ENCODE measurements at regions of chr4 and their contacts with region 1.

Region 1: DNA sequence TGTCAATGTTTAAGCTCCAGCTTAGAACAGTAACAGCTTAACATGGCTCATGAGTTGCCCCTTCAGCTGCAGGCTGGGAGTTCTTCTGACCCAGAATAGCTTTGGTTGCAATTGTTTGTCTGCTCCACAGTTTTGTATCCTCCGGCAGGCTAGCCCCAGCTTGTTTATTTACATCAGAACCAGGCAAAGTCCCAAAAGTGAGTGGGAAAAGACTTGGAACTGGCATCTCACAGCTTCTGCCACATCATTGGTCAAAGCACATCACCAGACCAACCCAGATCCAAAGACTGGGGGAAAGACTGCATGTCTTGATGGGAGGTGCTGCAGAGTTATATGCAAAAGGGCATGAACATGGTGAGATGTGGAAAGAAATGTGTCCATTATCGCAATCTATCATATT is 231.2 kb upstream of the CPEB2 start:
- DNase-seq: peak; percentile 89
- H3K4me3 Mint-ChIP-seq: no peak overlapping the region
- H3K27ac Mint-ChIP-seq: peak overlapping the region; percentile 81
- H3K4me1 Mint-ChIP-seq: peaks cover 13% of the 10 kb centered on the region
- H3K27me3 Mint-ChIP-seq: no peaks in the 10 kb centered on the region
- CTCF ChIP-seq: no peak

Region 2: DNA sequence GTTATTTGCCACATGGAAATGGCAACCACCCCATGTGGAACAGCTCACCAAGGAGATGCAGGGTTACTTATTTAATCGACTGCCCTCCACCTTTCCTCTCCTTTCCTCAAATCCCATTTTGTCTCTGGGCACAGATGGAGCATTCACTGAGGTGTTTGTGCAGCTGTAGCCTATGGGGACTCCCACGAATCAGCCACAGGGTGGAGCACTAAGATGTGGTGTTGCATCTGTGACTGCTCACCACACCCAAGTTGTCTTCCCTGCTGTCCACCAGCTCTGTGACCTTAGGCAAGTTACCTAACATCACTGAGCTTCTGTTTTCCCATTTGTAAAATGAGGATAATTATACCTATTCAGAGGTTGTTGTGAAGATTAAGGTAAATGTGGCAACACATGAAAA is 21.2 kb before region 1 on chr4:
- CTCF ChIA-PET with region 1: interaction called, 11 read pairs
- POLR2A ChIA-PET with region 1: interaction called, 5 read pairs
- intact Hi-C with region 1: no loop called
- DNase-seq: peak; percentile 64
- H3K4me3 Mint-ChIP-seq: no peak overlapping the region
- H3K27ac Mint-ChIP-seq: no peak overlapping the region
- H3K4me1 Mint-ChIP-seq: no peaks in the 10 kb centered on the region
- H3K27me3 Mint-ChIP-seq: no peaks in the 10 kb centered on the region
- CTCF ChIP-seq: peak; percentile 25

Region 3: GRCh38 chr4:14888790-14889572 is 117.9 kb after region 1 on chr4:
- CTCF ChIA-PET with region 1: no interaction called
- POLR2A ChIA-PET with region 1: interaction called, 10 read pairs
- intact Hi-C with region 1: no loop called
- DNase-seq: peak; percentile 60
- H3K4me3 Mint-ChIP-seq: no peak overlapping the region
- H3K27ac Mint-ChIP-seq: peak overlapping the region; percentile 70
- H3K4me1 Mint-ChIP-seq: peaks cover 15% of the 10 kb centered on the region
- H3K27me3 Mint-ChIP-seq: no peaks in the 10 kb centered on the region
- CTCF ChIP-seq: no peak

Measured in MCF 10A (cell line).